ENCODE measurements at regions of chr1 and their contacts with region 1.

Region 1: GRCh38 chr1:205255941-205256780 is 28.4 kb downstream of the TMCC2 start:
- DNase-seq: peak; percentile 75 to 90 (median 83)
- ATAC-seq: peak; percentile 99
- H3K4me3 ChIP-seq: no peak overlapping the region
- H3K4me3 Mint-ChIP-seq: no peak overlapping the region
- H3K27ac ChIP-seq: no peak overlapping the region
- H3K27ac Mint-ChIP-seq: no peak overlapping the region
- H3K4me1 ChIP-seq: peaks cover 6% of the 10 kb centered on the region
- H3K4me1 Mint-ChIP-seq: no peaks in the 10 kb centered on the region
- H3K27me3 ChIP-seq: peaks cover 0 to 2% of the 10 kb centered on the region in 2 experiments
- H3K27me3 Mint-ChIP-seq: no peaks in the 10 kb centered on the region
- CTCF ChIP-seq: peak; percentile 92

Region 2: GRCh38 chr1:204975570-204976235 is 280.5 kb before region 1 on chr1:
- CTCF ChIA-PET with region 1: interaction called, 12 read pairs
- POLR2A ChIA-PET with region 1: no interaction called
- intact Hi-C with region 1: loop called in 1 of 2 experiments (anchors 1 kb)
- DNase-seq: peak in 13 of 14 experiments; percentile 12 to 66 (median 35)
- ATAC-seq: peak; percentile 69
- H3K4me3 ChIP-seq: no peak overlapping the region
- H3K4me3 Mint-ChIP-seq: no peak overlapping the region
- H3K27ac ChIP-seq: no peak overlapping the region
- H3K27ac Mint-ChIP-seq: no peak overlapping the region
- H3K4me1 ChIP-seq: no peaks in the 10 kb centered on the region
- H3K4me1 Mint-ChIP-seq: no peaks in the 10 kb centered on the region
- H3K27me3 ChIP-seq: peaks cover 0 to 3% of the 10 kb centered on the region in 2 experiments
- H3K27me3 Mint-ChIP-seq: peaks cover 43% of the 10 kb centered on the region
- CTCF ChIP-seq: peak; percentile 72

Region 3: GRCh38 chr1:205061665-205062069 is 194.5 kb before region 1 on chr1:
- CTCF ChIA-PET with region 1: interaction called, 3 read pairs
- POLR2A ChIA-PET with region 1: no interaction called
- intact Hi-C with region 1: loop called in 1 of 2 experiments (anchors 5 kb)
- DNase-seq: peak; percentile 55 to 82 (median 70)
- ATAC-seq: peak; percentile 92
- H3K4me3 ChIP-seq: no peak overlapping the region
- H3K4me3 Mint-ChIP-seq: no peak overlapping the region
- H3K27ac ChIP-seq: no peak overlapping the region
- H3K27ac Mint-ChIP-seq: no peak overlapping the region
- H3K4me1 ChIP-seq: peaks cover 6% of the 10 kb centered on the region
- H3K4me1 Mint-ChIP-seq: no peaks in the 10 kb centered on the region
- H3K27me3 ChIP-seq: no peaks in the 10 kb centered on the region
- H3K27me3 Mint-ChIP-seq: no peaks in the 10 kb centered on the region
- CTCF ChIP-seq: peak; percentile 78

Region 4: DNA sequence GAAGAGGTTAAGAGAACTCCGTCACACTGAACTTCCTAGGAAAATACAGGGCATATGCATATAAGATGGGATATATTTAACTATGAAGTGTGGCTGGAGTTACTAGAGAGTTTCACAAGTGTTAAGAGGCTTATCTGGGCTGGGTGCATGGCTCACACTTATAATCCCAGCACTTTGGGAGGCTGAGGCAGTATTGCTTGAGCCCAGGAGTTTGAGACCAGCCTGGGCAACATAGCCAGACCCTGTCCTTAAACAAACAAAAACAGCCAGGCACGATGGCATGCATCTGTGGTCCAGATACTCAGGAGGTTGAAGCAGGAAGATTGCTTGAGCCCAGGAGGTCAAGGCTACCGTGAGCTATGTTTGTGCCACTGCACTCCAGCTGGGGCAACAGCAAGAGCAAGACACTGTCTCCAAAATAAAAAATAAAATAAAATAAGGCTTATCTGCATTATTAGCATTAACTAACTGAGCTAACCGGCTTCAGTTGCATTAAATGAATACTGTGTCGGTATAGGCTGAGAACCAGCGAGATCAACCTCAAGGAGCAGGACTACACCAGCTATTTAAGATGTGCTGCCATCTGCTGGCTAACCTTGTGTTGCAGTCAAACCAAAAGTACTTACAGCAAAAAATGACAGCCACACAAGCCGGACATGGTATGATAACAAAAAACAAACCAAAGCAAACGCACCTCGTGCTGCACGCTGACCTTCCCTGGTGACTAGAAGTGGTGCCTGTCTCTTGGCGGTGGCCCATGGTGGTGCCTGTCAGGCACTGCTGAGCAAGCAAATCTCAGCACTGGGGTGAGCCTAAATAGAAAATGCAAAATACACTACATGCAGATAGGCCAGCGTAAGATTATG is 114.7 kb before region 1 on chr1:
- CTCF ChIA-PET with region 1: interaction called, 5 read pairs
- POLR2A ChIA-PET with region 1: interaction called, 3 read pairs
- intact Hi-C with region 1: loop called (anchors 1 kb)
- DNase-seq: peak; percentile 56 to 86 (median 67)
- ATAC-seq: peak; percentile 95
- H3K4me3 ChIP-seq: no peak overlapping the region
- H3K4me3 Mint-ChIP-seq: no peak overlapping the region
- H3K27ac ChIP-seq: no peak overlapping the region
- H3K27ac Mint-ChIP-seq: peak overlapping the region; percentile 18
- H3K4me1 ChIP-seq: peaks cover 8% of the 10 kb centered on the region
- H3K4me1 Mint-ChIP-seq: peaks cover 10% of the 10 kb centered on the region
- H3K27me3 ChIP-seq: no peaks in the 10 kb centered on the region
- H3K27me3 Mint-ChIP-seq: no peaks in the 10 kb centered on the region
- CTCF ChIP-seq: peak; percentile 83

Region 5: DNA sequence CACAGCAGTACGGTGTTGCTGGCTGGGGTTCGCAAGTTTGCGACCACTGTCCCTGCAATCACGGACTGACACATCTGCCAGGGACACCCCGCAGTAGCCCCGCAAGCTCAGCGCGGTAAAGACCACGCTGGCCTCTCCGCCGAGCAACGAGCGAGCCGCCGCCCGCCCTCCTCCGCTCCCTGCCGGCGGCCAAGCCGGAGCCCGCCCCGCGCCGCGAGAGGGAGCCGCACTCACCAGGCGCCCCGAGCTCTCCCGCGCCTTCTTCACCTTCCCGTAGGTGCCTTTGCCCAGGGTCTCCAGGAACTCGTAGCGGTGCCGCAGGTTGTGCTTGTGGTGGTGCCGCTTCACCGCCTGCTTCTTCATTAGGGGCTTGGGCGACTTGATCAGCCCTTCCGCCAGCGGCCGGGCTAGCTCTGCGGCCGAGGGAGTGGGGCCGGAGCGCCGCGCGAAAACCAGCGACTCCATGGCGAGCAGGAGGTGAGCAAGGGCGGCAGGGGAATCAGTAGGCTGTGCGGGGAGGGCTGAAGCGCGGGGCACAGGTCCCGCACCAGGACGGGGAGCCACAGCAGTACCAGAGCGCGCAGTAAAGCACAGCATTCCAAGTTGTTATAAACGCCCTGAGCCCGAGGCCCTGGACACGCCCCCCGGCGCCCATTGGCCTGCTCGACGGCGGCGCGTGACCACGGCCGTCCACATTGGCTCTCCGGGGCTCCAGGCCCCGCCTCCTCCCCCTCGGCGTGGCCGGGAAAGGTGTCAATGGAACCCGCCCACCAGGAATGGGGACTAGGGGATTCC is 65.2 kb after region 1 on chr1 and contains the start of gene NUAK2:
- CTCF ChIA-PET with region 1: interaction called, 11 read pairs
- POLR2A ChIA-PET with region 1: no interaction called
- intact Hi-C with region 1: no loop called
- DNase-seq: peak; percentile 68 to 93 (median 86)
- ATAC-seq: peak; percentile 88
- H3K4me3 ChIP-seq: peak within 1 kb of the TSS; percentile 78
- H3K4me3 Mint-ChIP-seq: peak within 1 kb of the TSS; percentile 98
- H3K27ac ChIP-seq: peak within 1 kb of the TSS in 1 of 2 donors; percentile 87
- H3K27ac Mint-ChIP-seq: peak within 1 kb of the TSS; percentile 99
- H3K4me1 ChIP-seq: peaks cover 67% of the 10 kb centered on the region
- H3K4me1 Mint-ChIP-seq: peaks cover 71% of the 10 kb centered on the region
- H3K27me3 ChIP-seq: no peaks in the 10 kb centered on the region
- H3K27me3 Mint-ChIP-seq: no peaks in the 10 kb centered on the region
- CTCF ChIP-seq: peak; percentile 44
- total RNA-seq, gene NUAK2: 14.9 to 15.3 TPM

Region 6: GRCh38 chr1:205933671-205934618 is 677.8 kb after region 1 on chr1:
- CTCF ChIA-PET with region 1: no interaction called
- POLR2A ChIA-PET with region 1: no interaction called
- intact Hi-C with region 1: no loop called
- DNase-seq: peak in 2 of 14 experiments; percentile 23 to 38
- ATAC-seq: no peak
- H3K4me3 ChIP-seq: no peak overlapping the region
- H3K4me3 Mint-ChIP-seq: no peak overlapping the region
- H3K27ac ChIP-seq: no peak overlapping the region
- H3K27ac Mint-ChIP-seq: no peak overlapping the region
- H3K4me1 ChIP-seq: no peaks in the 10 kb centered on the region
- H3K4me1 Mint-ChIP-seq: no peaks in the 10 kb centered on the region
- H3K27me3 ChIP-seq: peaks cover 2 to 14% of the 10 kb centered on the region in 2 experiments
- H3K27me3 Mint-ChIP-seq: peaks cover 51% of the 10 kb centered on the region
- CTCF ChIP-seq: no peak

Measured in CD4-positive, alpha-beta T cell (primary cell).